AG04449 (cell line): ENCODE measurements at regions of chr9 and their contacts with region 1.

Region 1: GRCh38 chr9:2132484-2133082 is 117.4 kb downstream of the SMARCA2 start:
- DNase-seq: no peak
- H3K4me3 ChIP-seq: no peak overlapping the region
- CTCF ChIP-seq: peak; percentile 49

Region 2: DNA sequence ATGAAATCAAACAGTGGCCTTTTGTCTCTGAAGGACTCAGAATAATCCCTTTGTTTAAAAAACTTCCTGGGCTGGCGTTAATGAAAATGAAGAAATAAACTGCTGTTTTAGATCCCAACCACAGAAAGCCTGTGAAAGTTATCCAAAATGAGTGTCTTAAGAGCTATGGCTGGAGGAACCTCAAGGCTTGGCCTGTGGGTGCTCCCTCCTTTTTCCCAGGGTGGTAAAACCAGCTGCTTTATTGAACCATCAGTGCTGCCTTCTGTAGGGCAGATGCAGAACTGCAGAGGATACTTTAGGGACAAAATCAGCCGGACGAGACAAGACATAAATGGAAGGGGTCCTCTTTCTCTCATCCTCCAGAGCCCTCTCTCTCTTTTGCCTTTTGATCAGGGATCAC is 16.5 kb before region 1 on chr9:
- CTCF ChIA-PET with region 1: interaction called, 37 read pairs
- POLR2A ChIA-PET with region 1: no interaction called
- DNase-seq: no peak
- H3K4me3 ChIP-seq: no peak overlapping the region
- CTCF ChIP-seq: peak; percentile 42

Region 3: GRCh38 chr9:2145746-2146145 is 13.2 kb after region 1 on chr9:
- CTCF ChIA-PET with region 1: interaction called, 12 read pairs
- POLR2A ChIA-PET with region 1: no interaction called
- DNase-seq: no peak
- H3K4me3 ChIP-seq: no peak overlapping the region
- CTCF ChIP-seq: no peak

Region 4: DNA sequence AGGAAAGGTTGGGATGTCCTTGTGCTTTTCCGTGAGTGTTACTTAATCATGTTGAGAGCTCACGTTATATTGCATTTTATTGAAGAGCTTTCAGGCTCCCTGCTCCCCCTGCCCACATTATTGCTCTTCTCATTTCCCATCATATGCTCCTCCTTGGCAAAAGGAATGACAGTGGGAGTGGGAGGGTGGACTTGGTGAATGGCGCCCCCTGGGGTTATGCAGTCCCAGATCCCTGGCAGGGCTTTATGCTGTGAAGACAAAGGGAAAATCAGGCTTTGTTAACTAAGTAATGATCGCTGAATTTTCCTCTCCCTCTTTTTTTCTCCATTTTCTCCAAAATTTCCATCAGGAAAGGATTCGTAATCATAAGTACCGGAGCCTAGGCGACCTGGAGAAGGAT is 49.2 kb after region 1 on chr9:
- CTCF ChIA-PET with region 1: interaction called, 28 read pairs
- POLR2A ChIA-PET with region 1: no interaction called
- DNase-seq: no peak
- H3K4me3 ChIP-seq: no peak overlapping the region
- CTCF ChIP-seq: peak; percentile 45

Region 5: DNA sequence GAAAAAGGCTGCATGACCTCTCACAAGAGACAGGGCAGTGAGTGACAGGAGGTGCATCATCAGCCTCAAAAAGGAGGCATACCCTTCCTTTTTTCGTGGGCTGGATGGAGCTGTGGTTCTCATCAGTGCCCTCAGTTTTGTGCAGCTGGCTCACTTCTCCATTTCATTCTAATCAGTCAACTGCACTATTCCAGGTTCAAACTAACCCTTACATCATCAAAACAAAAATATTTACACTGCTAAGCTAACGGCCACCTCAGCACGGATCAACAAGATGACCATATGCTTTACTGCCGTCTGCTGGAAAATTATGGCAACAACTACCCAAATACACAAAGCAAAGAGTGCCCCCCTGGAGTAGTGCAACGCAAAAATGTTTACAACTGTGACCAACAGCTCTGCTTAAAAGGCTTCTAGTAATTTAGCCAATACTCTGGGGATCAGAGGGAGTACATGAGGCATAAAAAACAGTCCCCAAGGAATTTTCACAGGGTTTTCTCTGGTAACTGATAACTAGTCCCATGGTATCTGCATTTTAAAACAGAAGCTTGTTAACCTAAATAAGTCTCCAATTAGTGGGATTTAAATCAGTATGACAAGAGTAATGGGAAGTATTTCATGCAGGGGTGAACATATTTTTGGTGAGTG is 595.5 kb after region 1 on chr9:
- CTCF ChIA-PET with region 1: interaction called, 30 read pairs
- POLR2A ChIA-PET with region 1: no interaction called
- DNase-seq: no peak
- H3K4me3 ChIP-seq: no peak overlapping the region
- CTCF ChIP-seq: peak; percentile 57

Region 6: DNA sequence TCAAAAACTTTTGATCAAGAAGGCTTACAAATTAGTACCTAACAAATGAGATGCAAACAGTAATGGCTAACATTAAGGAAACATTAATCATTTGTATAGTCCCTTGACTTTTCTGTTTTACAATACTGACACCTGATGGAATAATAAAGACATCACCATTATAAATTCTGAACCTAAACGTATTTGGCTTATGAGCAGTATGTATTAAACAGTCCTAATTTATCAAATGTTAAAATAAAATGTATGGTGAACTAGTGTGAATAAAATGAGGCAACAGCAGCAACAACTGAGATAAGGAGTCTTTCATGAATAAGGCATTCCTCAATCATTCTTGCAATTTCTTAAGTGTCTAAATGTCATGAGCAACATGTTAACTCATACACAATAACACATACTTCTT is 705.3 kb after region 1 on chr9:
- CTCF ChIA-PET with region 1: interaction called, 11 read pairs
- POLR2A ChIA-PET with region 1: no interaction called
- DNase-seq: no peak
- H3K4me3 ChIP-seq: no peak overlapping the region
- CTCF ChIP-seq: no peak